ENCODE measurements at regions of chr3 and their contacts with region 1.

Region 1: DNA sequence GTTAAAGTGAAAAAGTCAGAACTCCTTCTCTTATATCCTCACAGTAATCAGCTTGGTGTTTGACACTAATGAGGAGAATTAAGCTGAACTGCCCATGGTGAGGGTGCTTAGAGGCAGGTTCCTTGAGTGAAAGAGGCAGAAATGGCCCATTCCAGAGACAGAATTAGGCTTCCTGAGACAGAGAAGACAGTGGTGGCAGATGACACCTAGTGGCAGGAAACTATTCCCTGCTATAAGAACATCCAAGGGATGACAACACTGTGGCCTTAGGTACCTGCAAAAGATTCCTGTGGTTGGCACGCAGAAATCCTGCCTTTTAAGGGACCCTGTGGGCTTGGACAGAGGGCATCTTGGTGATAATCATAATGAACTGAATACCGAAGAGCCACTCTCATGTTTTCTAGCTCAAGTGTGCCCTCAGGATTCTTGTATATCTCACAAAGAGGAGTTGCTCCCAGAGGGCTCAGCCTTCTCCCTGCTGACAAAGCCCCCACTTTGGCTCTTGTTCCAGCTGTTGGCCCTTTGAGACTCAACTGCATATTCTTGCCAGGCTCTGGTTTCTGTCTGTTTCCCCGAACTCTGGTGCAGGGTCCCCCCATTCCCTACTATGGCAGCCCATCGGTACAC is 56.0 kb downstream of the KBTBD12 start:
- DNase-seq: no peak
- ATAC-seq: peak; percentile 70
- H3K4me3 ChIP-seq: no peak overlapping the region
- H3K27ac ChIP-seq: no peak overlapping the region
- H3K4me1 ChIP-seq: no peaks in the 10 kb centered on the region
- H3K27me3 ChIP-seq: no peaks in the 10 kb centered on the region

Region 2: DNA sequence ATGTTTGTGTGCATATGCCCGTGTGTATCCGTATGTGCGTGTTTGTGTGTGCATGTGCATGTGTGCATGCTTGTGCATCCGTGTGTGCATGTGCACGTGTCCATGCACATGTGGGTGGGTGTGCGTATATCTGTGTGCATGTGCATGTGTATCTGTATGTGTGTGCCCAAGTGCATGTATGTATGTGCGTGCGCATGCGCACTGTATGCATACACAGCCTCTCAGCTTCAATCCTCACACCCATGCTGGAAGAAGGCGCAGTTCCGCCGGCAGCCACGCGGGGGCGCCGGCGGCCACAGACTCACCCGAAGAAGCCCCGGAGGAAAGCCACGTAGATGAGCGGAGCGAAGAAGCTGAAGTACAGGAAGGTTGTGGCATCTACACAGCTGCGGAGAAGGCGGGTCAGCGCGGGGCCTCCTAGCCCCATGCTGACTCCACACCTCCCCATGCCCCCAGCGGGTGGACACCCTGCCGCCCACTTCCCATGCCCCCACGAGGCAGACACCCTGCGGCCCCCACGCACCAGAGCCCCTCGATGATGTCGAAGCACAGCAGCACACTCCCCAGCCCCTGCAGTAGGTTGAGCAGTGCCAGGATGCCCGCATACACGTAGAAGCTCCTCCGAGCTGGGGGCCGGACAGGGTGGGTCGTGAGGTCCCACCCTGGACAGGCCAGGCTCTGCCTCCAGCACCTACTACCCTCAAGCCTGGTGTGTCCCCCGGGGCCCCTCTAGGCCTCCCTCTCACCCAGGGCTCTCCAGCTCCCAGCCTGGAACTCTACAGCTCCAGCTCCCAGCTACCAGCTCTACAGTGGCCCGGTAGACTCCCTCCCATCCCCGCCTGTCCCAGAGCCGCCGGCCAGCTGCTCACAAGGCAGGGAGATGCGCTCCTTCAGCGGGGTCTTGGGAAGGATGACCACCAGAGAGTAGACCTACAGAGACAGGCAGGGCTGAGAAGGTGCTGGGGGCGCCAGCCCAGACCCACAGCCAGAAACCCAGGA is 395.9 kb before region 1 on chr3:
- intact Hi-C with region 1: loop called in 1 of 2 experiments (anchors 5 kb)
- DNase-seq: peak; percentile 88 to 93
- ATAC-seq: peak; percentile 87
- H3K4me3 ChIP-seq: no peak overlapping the region
- H3K27ac ChIP-seq: no peak overlapping the region
- H3K4me1 ChIP-seq: no peaks in the 10 kb centered on the region
- H3K27me3 ChIP-seq: no peaks in the 10 kb centered on the region

Region 3: DNA sequence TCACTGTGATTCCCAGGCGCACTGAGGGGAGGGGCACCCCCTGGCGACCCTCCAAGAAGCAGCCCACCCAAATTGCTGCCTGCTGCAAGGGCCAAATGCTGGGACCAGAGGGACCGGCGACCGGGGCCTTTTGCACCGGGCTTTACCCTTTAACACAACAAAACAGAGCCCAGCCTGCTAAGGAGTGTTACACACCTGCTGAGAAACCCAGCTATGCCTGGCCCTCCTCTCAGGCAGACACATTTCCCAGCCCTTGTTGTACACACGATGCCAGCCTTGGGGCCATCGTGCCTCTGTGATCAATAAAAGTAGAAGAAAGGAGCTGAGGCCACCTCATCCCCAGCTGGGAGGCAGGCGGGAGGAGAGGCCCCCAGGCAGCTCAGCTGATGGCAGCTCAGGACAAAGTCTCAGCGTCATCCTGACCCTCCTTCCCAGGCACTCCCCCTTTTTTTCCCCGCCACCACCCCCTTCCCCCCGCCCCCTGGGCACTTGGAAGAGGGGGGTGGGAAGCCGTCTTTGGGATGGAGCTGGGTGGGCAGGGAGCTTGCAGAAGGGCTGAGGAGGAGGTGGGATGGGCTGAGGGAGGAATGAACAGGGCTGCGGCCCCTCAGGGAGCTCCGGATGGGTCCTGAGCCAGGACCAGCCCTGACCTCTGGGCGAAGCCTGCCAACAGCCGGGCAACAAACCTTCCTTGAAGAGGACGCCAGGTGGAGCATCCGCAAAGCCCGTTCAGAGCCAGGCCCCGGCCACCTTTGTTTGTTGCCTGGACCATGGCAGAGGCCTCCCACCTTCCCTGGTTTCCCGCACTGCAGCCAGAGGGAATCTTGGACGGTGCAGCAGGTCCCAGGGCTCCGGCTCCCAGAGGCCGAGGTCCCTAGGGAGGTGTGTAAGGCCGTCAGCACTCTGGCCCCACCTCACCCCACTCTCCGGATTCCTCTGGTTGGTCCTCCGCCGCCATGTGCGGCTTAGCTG is 35.3 kb after region 1 on chr3:
- intact Hi-C with region 1: no loop called
- DNase-seq: peak; percentile 63 to 87
- ATAC-seq: peak; percentile 72
- H3K4me3 ChIP-seq: no peak overlapping the region
- H3K27ac ChIP-seq: peak overlapping the region in 1 of 2 donors; percentile 35
- H3K4me1 ChIP-seq: no peaks in the 10 kb centered on the region
- H3K27me3 ChIP-seq: peaks cover 0 to 2% of the 10 kb centered on the region in 2 donors

Measured in aorta (tissue), 5 donors.